Mammary epithelial cell (primary cell): ENCODE measurements at regions of chr7 and their contacts with region 1.

Region 1: GRCh38 chr7:151448261-151449252 is 8.6 kb upstream of the CRYGN start:
- DNase-seq: no peak
- H3K4me3 ChIP-seq: peak overlapping the region; percentile 49 to 56 (median 51)
- H3K27ac ChIP-seq: no peak overlapping the region
- H3K4me1 ChIP-seq: peaks cover 7% of the 10 kb centered on the region
- H3K27me3 ChIP-seq: no peaks in the 10 kb centered on the region
- CTCF ChIP-seq: peak; percentile 64 to 69

Region 2: DNA sequence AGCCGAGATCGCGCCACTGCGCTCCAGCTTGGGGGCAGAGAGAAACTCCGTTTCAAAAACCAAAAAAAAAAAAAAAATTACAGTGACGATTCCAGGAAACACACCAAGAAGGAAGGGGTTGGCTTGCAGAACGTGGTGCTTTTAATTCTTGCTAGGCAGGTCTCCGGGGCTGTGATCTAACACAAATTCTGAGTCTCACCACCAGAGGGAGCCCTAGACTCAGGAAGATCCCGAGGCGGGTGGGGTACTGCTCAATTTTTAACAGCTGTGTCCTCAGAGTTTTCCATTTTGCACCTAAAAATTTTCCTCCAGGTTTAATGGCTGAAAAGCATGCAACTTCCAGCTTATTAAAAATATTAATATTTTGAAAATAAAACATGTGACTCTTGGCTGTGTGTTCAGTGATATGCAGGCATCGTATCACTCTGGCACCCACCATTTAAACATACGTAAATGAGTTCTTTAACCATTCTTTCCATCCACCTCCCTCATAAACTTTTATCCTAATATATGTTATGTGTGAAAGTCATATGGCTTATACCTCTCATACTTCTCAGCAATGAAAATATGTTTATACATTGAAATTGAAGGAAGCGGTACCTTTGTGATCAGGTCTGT is 133.4 kb before region 1 on chr7:
- CTCF ChIA-PET with region 1: no interaction called
- dilution Hi-C with region 1: no loop called
- in situ Hi-C with region 1: no loop called
- intact Hi-C with region 1: loop called (anchors 2 kb)
- DNase-seq: peak; percentile 40
- H3K4me3 ChIP-seq: no peak overlapping the region
- H3K27ac ChIP-seq: no peak overlapping the region
- H3K4me1 ChIP-seq: no peaks in the 10 kb centered on the region
- H3K27me3 ChIP-seq: no peaks in the 10 kb centered on the region
- CTCF ChIP-seq: peak; percentile 65 to 77

Region 3: DNA sequence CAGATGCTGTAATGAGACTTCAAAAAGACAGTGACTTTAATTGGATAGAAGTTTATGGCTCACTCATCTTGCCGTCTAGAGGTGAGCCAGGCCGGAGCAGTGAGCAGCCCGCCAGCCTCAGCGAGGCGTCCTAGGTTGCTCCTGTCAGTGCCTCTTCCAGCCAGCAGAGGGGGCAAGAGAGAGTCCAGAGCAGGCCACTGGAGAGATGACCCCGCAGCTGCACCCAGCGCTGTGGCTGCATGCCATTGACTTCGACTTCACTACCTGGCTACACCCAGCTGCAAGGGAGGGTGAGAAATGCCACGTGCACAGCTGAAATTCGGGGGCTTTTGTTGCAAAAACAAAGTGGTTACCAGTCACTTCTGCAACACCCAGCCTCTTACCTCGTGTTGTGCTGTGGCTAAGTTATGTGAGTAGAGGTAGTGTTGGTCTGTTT is 80.4 kb before region 1 on chr7:
- CTCF ChIA-PET with region 1: no interaction called
- dilution Hi-C with region 1: loop called (anchors 5 kb)
- in situ Hi-C with region 1: loop called (anchors 5 to 10 kb)
- intact Hi-C with region 1: loop called (anchors 1 kb)
- DNase-seq: peak; percentile 61
- H3K4me3 ChIP-seq: no peak overlapping the region
- H3K27ac ChIP-seq: no peak overlapping the region
- H3K4me1 ChIP-seq: peaks cover 3% of the 10 kb centered on the region
- H3K27me3 ChIP-seq: no peaks in the 10 kb centered on the region
- CTCF ChIP-seq: peak; percentile 91 to 97